ENCODE measurements at regions of chr22 and their contacts with region 1.

Region 1: DNA sequence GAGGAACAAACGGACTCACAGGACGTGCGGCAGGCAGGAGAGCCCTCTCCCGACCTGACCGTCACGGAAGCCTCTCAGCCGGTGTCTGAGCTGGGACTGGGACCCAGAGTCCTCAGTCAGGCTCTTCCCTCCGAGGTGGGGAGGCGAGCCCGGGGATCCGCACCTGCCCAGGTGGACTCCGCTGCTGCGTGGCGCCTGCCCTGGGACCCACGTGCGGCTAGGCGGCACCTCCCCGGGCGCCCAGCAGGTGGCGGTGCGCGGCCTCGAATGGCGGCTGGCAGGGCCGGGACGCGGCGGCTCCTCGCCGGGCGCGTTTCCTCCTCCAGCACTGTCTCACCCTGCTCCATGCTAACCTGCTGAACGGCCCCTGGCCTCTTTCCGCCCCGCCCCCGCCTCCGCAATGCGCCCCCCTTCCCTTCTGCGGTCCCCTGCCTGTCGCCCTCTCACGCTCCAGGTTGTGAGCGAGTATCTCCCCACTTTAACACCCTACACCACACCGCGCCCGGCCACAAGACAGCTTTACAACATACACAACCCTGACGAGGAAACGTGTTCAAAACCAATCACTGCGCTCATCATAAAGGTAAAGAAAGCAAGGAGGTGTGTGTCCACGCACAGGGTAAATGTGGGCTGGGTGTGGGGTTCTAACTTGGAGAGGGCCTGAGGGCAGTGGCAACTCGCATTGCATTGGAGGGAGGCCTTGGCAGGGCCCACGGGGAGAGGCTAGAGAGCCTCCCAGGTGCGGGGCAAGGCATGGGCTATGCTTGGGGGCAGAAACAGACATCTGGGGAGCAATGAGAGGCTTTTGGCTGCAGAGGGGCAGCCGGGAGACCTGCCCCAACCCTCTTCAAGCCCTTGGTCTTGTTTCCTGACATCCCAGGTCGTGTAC is 25.9 kb upstream of the ATXN10 start:
- DNase-seq: no peak
- ATAC-seq: peak; percentile 100
- H3K4me3 ChIP-seq: no peak overlapping the region
- H3K27ac ChIP-seq: no peak overlapping the region
- H3K4me1 ChIP-seq: no peaks in the 10 kb centered on the region; the same call in 1 of the 2 replicates
- H3K27me3 ChIP-seq: no peaks in the 10 kb centered on the region; a peak in 1 of 4 replicates
- CTCF ChIP-seq: peak; percentile 78 to 94 (median 82)
- EP300 ChIP-seq: no peak
- POLR2A ChIP-seq: no peak
- RAD21 ChIP-seq: peak; percentile 96

Region 2: GRCh38 chr22:45621821-45622600 is 23.8 kb before region 1 on chr22:
- CTCF ChIA-PET with region 1: no interaction called
- POLR2A ChIA-PET with region 1: no interaction called
- RAD21 ChIA-PET with region 1: no interaction called
- SMC1A ChIA-PET with region 1: no interaction called
- in situ Hi-C with region 1: no loop called
- intact Hi-C with region 1: no loop called
- DNase-seq: no peak
- ATAC-seq: no peak
- H3K4me3 ChIP-seq: no peak overlapping the region
- H3K27ac ChIP-seq: no peak overlapping the region
- H3K4me1 ChIP-seq: no peaks in the 10 kb centered on the region
- H3K27me3 ChIP-seq: no peaks in the 10 kb centered on the region; a peak in 1 of 4 replicates
- CTCF ChIP-seq: no peak
- EP300 ChIP-seq: no peak
- POLR2A ChIP-seq: no peak
- RAD21 ChIP-seq: no peak

Region 3: DNA sequence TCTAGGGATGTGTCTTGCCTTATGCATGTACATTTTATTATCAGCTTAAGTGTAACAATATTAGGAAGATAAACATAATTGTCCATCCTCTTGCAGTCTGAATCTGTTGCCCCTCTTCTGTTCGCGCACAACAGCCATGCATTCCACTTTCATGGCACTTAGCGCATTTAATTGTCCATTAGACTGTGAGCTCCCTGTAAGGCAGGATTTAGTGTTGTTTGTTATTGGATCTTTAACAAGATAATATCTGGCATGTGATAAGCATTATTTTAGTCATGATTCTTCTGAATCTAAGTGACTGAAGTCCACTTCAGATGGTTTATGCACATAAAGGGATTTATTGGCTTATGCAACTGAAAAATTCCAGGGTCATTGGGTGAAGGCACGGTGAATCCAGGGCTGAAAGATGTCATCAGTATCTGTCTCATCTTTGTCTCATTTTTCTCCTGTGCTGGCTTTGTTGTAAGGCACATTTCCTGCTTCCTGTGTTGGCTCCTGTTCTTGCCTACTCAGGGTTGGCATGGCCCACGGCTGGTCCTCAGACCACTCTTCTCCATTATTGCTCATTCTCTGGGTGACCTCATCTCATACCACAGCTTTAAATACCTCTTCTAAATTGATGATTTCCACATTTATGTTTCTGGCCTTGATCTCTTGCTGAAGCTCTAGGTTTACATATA is 63.4 kb after region 1 on chr22:
- CTCF ChIA-PET with region 1: no interaction called
- POLR2A ChIA-PET with region 1: no interaction called
- RAD21 ChIA-PET with region 1: no interaction called
- SMC1A ChIA-PET with region 1: no interaction called
- in situ Hi-C with region 1: no loop called
- intact Hi-C with region 1: no loop called
- DNase-seq: no peak
- ATAC-seq: no peak
- H3K4me3 ChIP-seq: no peak overlapping the region
- H3K27ac ChIP-seq: no peak overlapping the region
- H3K4me1 ChIP-seq: no peaks in the 10 kb centered on the region
- H3K27me3 ChIP-seq: no peaks in the 10 kb centered on the region
- CTCF ChIP-seq: no peak
- EP300 ChIP-seq: no peak
- POLR2A ChIP-seq: no peak
- RAD21 ChIP-seq: no peak

Region 4: DNA sequence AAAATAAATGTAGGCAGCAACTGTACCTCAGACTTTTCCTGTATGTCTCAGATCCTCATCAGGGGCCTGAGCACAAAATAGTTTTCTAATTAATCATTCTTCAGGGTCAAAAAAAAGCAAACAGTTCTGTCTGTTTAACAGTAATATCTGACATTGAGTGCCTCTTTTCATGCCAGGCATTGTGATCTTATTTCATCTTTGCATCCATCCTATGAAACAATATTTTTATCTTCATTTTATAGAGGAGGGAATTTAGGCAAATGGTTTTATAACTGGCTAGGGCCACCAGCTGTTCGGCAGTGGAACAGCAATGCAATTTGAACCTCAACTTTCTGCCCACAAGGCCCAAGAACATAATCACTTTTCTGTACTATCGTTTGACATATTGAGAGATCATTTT is 185.6 kb after region 1 on chr22:
- CTCF ChIA-PET with region 1: interaction called, 14 read pairs
- POLR2A ChIA-PET with region 1: no interaction called
- RAD21 ChIA-PET with region 1: no interaction called
- SMC1A ChIA-PET with region 1: no interaction called
- in situ Hi-C with region 1: no loop called
- intact Hi-C with region 1: loop called (anchors 5 kb)
- DNase-seq: no peak
- ATAC-seq: no peak
- H3K4me3 ChIP-seq: no peak overlapping the region
- H3K27ac ChIP-seq: no peak overlapping the region
- H3K4me1 ChIP-seq: no peaks in the 10 kb centered on the region
- H3K27me3 ChIP-seq: no peaks in the 10 kb centered on the region
- CTCF ChIP-seq: peak; percentile 33 to 49 (median 37); a peak in 4 of 6 replicates
- EP300 ChIP-seq: no peak
- POLR2A ChIP-seq: no peak
- RAD21 ChIP-seq: peak; percentile 45

Measured in GM12878 (cell line).